ENCODE measurements at regions of chr2 and their contacts with region 1.

Region 1: GRCh38 chr2:79041032-79041448 is 15.5 kb downstream of the REG3G start:
- DNase-seq: no peak
- ATAC-seq: no peak
- H3K4me3 ChIP-seq: no peak overlapping the region
- H3K27ac ChIP-seq: no peak overlapping the region
- H3K4me1 ChIP-seq: no peaks in the 10 kb centered on the region
- H3K27me3 ChIP-seq: no peaks in the 10 kb centered on the region
- CTCF ChIP-seq: peak in 7 of 9 donors; percentile 13 to 48 (median 36)

Region 2: GRCh38 chr2:79071078-79071477 is 30.0 kb after region 1 on chr2:
- intact Hi-C with region 1: no loop called
- DNase-seq: no peak
- ATAC-seq: no peak
- H3K4me3 ChIP-seq: no peak overlapping the region
- H3K27ac ChIP-seq: no peak overlapping the region
- H3K4me1 ChIP-seq: no peaks in the 10 kb centered on the region
- H3K27me3 ChIP-seq: no peaks in the 10 kb centered on the region
- CTCF ChIP-seq: no peak

Region 3: GRCh38 chr2:79219383-79219988 is 178.4 kb after region 1 on chr2:
- intact Hi-C with region 1: loop called in 1 of 10 experiments (anchors 5 kb)
- DNase-seq: peak in 1 of 2 donors; percentile 7
- ATAC-seq: no peak
- H3K4me3 ChIP-seq: no peak overlapping the region
- H3K27ac ChIP-seq: no peak overlapping the region
- H3K4me1 ChIP-seq: no peaks in the 10 kb centered on the region
- H3K27me3 ChIP-seq: peaks cover 0 to 7% (median 0%) of the 10 kb centered on the region in 7 donors
- CTCF ChIP-seq: peak; percentile 38 to 73 (median 68)

Region 4: DNA sequence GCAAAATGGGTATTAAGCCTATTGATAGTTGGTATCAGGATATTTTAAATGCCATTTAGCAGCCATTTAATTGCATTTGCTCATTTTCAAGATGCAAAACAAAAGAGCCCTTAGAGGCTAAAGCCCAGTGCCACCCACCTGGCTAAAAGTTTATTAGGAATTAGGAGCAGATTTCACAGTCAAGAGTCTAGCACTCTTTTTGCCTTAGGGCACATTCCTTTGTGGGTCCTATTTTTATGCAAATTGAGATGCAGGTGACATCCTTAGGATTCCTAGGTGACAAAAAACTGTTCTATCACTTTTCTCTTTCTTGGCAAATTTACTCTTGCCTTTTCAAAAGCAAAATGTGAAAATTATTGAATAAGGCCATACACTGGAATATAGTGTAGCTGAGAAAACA is 513.9 kb after region 1 on chr2:
- intact Hi-C with region 1: no loop called
- DNase-seq: no peak
- ATAC-seq: no peak
- H3K4me3 ChIP-seq: no peak overlapping the region
- H3K27ac ChIP-seq: no peak overlapping the region
- H3K4me1 ChIP-seq: no peaks in the 10 kb centered on the region
- H3K27me3 ChIP-seq: no peaks in the 10 kb centered on the region
- CTCF ChIP-seq: no peak